ENCODE measurements at regions of chr7 and their contacts with region 1.

Region 1: GRCh38 chr7:4226525-4226884 is 455.6 kb upstream of the FOXK1 start:
- DNase-seq: peak in 2 of 4 experiments; percentile 24 to 39
- ATAC-seq: peak; percentile 88
- H3K4me3 ChIP-seq: no peak overlapping the region
- H3K27ac ChIP-seq: no peak overlapping the region
- H3K4me1 ChIP-seq: no peaks in the 10 kb centered on the region
- H3K27me3 ChIP-seq: peaks cover 5 to 29% of the 10 kb centered on the region in 2 experiments; a peak in 3 of 5 replicates
- CTCF ChIP-seq: peak; percentile 49 to 54 (median 52); a peak in 5 of 6 replicates
- EP300 ChIP-seq: no peak
- POLR2A ChIP-seq: no peak
- RAD21 ChIP-seq: peak in 1 of 2 experiments; percentile 46; a peak in 2 of 4 replicates

Region 2: GRCh38 chr7:4361757-4362156 is 135.3 kb after region 1 on chr7:
- CTCF ChIA-PET with region 1: no interaction called
- POLR2A ChIA-PET with region 1: no interaction called
- in situ Hi-C with region 1: no loop called
- intact Hi-C with region 1: no loop called
- DNase-seq: no peak
- ATAC-seq: no peak
- H3K4me3 ChIP-seq: no peak overlapping the region
- H3K27ac ChIP-seq: no peak overlapping the region
- H3K4me1 ChIP-seq: no peaks in the 10 kb centered on the region
- H3K27me3 ChIP-seq: no peaks in the 10 kb centered on the region
- CTCF ChIP-seq: peak in 1 of 3 experiments; percentile 54; a peak in 3 of 6 replicates
- EP300 ChIP-seq: no peak
- POLR2A ChIP-seq: no peak
- RAD21 ChIP-seq: no peak

Region 3: DNA sequence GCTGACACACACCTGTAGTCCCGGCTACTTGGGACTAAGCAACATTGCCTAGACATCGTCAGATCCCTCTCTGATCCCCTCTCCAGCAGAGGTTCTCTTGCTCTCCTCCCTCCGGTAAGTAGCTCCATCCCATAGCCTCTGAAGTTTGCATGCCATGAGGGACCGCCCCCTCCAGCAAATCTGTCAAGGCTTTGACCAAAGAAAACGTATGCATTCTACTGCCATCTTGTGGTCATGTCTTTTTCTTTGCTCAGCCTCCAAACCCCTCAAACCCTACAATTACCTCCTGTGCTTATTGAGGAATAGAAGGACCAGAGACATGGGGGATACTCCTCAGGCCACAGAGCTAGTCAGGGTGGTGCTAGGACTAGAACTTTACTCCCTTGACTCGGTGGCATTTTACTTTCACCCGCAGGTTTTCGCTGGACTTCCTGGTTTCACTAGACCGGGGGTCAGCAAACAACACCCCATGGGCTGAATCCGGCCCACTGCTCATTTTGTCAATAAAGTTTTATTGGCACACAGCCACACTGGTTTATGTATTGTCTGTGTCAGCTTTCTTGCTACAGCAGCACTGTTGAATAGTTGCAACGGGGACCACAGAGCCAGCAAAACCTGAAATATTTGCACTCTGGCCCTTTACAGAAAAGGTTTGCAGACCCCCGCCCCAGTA is 253.0 kb after region 1 on chr7:
- CTCF ChIA-PET with region 1: no interaction called
- POLR2A ChIA-PET with region 1: no interaction called
- in situ Hi-C with region 1: no loop called
- intact Hi-C with region 1: loop called (anchors 2 kb)
- DNase-seq: peak; percentile 64 to 74 (median 66)
- ATAC-seq: peak; percentile 94
- H3K4me3 ChIP-seq: no peak overlapping the region
- H3K27ac ChIP-seq: no peak overlapping the region
- H3K4me1 ChIP-seq: no peaks in the 10 kb centered on the region
- H3K27me3 ChIP-seq: no peaks in the 10 kb centered on the region
- CTCF ChIP-seq: peak; percentile 53 to 64 (median 58)
- EP300 ChIP-seq: no peak
- POLR2A ChIP-seq: no peak
- RAD21 ChIP-seq: peak; percentile 20 to 66; a peak in 2 of 4 replicates

Region 4: GRCh38 chr7:4945949-4946348 is 719.4 kb after region 1 on chr7:
- CTCF ChIA-PET with region 1: no interaction called
- POLR2A ChIA-PET with region 1: no interaction called
- in situ Hi-C with region 1: no loop called
- intact Hi-C with region 1: no loop called
- DNase-seq: no peak
- ATAC-seq: no peak
- H3K4me3 ChIP-seq: no peak overlapping the region
- H3K27ac ChIP-seq: no peak overlapping the region
- H3K4me1 ChIP-seq: no peaks in the 10 kb centered on the region
- H3K27me3 ChIP-seq: peaks cover 11 to 50% of the 10 kb centered on the region in 2 experiments; a peak in 4 of 5 replicates
- CTCF ChIP-seq: no peak
- EP300 ChIP-seq: no peak
- POLR2A ChIP-seq: no peak
- RAD21 ChIP-seq: no peak